CD8-positive, alpha-beta T cell (primary cell): ENCODE measurements at regions of chr1 and their contacts with region 1.

Region 1: GRCh38 chr1:219209578-219209977 is 35.9 kb downstream of the LYPLAL1 start:
- DNase-seq: no peak
- ATAC-seq: no peak
- H3K4me3 ChIP-seq: no peak overlapping the region
- H3K4me3 Mint-ChIP-seq: no peak overlapping the region
- H3K27ac ChIP-seq: no peak overlapping the region
- H3K27ac Mint-ChIP-seq: no peak overlapping the region
- H3K4me1 ChIP-seq: no peaks in the 10 kb centered on the region
- H3K4me1 Mint-ChIP-seq: peaks cover 3% of the 10 kb centered on the region
- H3K27me3 ChIP-seq: no peaks in the 10 kb centered on the region
- H3K27me3 Mint-ChIP-seq: no peaks in the 10 kb centered on the region
- CTCF ChIP-seq: no peak

Region 2: GRCh38 chr1:219416594-219417238 is 207.1 kb after region 1 on chr1:
- CTCF ChIA-PET with region 1: no interaction called
- POLR2A ChIA-PET with region 1: no interaction called
- intact Hi-C with region 1: loop called in 1 of 2 experiments (anchors 10 kb)
- DNase-seq: peak in 8 of 9 experiments; percentile 13 to 64 (median 46)
- ATAC-seq: no peak
- H3K4me3 ChIP-seq: no peak overlapping the region
- H3K4me3 Mint-ChIP-seq: no peak overlapping the region
- H3K27ac ChIP-seq: no peak overlapping the region
- H3K27ac Mint-ChIP-seq: no peak overlapping the region
- H3K4me1 ChIP-seq: no peaks in the 10 kb centered on the region
- H3K4me1 Mint-ChIP-seq: no peaks in the 10 kb centered on the region
- H3K27me3 ChIP-seq: no peaks in the 10 kb centered on the region
- H3K27me3 Mint-ChIP-seq: no peaks in the 10 kb centered on the region
- CTCF ChIP-seq: peak; percentile 47